Ascending aorta (tissue), 2 donors: ENCODE measurements at regions of chr7 and their contacts with region 1.

Region 1: DNA sequence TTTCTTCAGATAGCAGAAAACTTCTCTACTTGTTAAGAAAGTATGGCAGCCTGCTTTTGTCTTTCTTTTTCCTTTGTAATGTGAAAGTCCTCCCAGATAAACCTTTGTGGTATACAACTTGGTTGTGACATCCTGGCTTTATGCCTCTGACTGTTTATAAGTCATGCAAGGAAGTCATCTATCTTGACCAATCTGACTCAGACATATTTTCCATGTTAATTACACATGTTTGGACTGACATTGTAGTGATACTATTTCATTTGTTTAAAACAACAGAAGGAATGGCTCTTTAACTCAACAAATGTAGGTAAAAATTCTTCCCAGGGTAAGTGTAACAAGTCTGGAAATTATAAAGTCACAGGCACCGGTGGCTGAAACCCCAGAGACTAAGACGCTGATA is 341.6 kb upstream of the MEOX2 start:
- DNase-seq: no peak
- H3K4me3 ChIP-seq: no peak overlapping the region
- H3K27ac ChIP-seq: peak overlapping the region; percentile 57 to 61
- H3K4me1 ChIP-seq: peaks cover 0 to 20% of the 10 kb centered on the region in 2 donors
- H3K27me3 ChIP-seq: no peaks in the 10 kb centered on the region
- CTCF ChIP-seq: no peak

Region 2: GRCh38 chr7:15816835-15817426 is 211.2 kb before region 1 on chr7:
- intact Hi-C with region 1: loop called (anchors 10 kb)
- DNase-seq: no peak
- H3K4me3 ChIP-seq: no peak overlapping the region
- H3K27ac ChIP-seq: peak overlapping the region in 1 of 2 donors; percentile 7
- H3K4me1 ChIP-seq: peaks cover 0 to 6% of the 10 kb centered on the region in 2 donors
- H3K27me3 ChIP-seq: no peaks in the 10 kb centered on the region
- CTCF ChIP-seq: no peak